GM12878 (cell line): ENCODE measurements at regions of chr19 and their contacts with region 1.

Region 1: DNA sequence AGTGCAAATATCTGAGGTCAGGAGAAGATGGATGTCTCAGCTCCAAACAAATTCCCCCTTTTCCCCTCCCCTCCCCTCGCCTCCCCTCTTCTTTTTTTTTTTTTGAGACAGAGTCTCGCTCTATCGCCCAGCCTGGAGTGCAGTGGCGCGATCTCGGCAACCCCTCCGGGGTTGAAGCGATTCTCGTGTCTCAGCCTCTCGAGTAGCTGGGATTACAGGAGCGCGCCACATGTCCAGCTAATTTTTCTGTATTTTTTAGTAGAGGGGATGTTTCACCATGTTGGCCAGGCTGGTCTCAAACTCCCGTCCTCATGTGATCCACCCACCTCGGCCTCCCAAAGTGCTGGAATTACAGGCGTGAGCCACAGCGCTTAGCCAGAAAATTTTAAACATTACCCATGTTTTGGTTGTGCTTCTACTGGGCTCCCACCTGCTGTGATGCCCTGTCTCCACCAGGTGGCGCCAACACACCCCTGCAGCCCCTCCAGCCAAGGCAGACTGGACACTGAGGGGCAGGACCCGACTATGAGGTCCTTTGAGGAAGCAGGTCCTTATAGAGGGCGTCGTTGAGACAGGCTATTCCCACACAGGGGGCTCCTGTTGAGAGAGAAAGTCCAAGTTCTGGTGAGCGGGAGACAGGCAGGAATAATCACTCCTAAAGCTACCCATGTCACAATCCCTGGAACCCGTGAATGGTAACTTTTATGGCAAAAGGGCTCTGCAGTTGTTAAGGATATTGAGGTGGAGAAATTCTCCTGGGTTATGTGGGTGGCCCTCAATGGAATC is 6.3 kb downstream of the ERICH4 start:
- DNase-seq: no peak
- ATAC-seq: peak; percentile 99
- H3K4me3 ChIP-seq: peak overlapping the region; percentile 61
- H3K27ac ChIP-seq: no peak overlapping the region
- H3K4me1 ChIP-seq: peaks cover 8% of the 10 kb centered on the region
- H3K27me3 ChIP-seq: no peaks in the 10 kb centered on the region
- CTCF ChIP-seq: peak; percentile 94 to 97 (median 97)
- EP300 ChIP-seq: no peak
- POLR2A ChIP-seq: no peak
- RAD21 ChIP-seq: peak; percentile 94

Region 2: DNA sequence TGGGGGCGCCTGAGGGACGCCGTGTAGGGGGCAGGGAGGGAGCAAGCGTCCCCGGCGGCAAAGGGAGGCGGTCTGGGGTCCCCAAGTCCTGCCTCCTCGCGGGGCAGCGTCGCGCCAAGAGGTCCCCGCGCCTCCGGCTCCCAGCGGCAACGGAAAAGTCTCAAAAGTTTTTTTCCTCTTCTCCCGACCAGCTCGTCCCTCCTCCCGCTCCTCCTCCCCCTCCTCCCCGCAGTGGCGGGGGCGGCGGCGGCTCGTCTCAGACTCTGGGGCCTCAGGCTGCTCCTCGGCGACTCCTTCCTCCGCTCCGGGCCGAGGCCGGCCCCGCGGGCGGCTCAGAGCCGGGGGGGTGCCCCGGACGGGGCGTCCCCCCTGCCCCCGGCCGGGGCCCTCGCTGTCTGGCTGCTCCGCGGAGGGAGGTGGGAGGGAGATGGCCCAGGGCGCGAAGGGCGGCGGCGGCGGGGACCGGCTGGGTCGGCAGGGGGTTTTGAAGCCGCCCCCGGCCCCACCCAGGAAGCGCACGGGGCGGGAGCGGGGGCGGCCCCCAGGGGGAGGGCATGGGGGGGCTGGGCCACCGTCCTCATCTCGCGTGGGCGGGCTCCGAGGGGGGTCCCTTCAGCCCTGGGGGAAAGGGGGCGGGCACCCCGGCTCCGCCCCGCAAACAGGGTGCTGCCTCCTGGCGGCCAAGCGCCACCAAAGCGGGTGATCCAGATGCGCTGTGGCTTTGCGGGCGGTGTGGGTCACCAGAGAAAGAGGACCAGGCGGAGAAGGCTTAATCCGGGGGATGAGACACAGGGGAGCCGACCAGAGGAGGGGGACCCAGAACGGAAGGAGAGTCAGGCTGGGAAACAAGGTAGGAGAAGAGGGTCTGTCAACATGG is 95.6 kb before region 1 on chr19 and contains the start of gene TGFB1:
- CTCF ChIA-PET with region 1: interaction called, 4 read pairs
- POLR2A ChIA-PET with region 1: no interaction called
- RAD21 ChIA-PET with region 1: no interaction called
- SMC1A ChIA-PET with region 1: no interaction called
- in situ Hi-C with region 1: no loop called
- intact Hi-C with region 1: loop called (anchors 5 kb)
- DNase-seq: peak; percentile 62
- ATAC-seq: peak; percentile 64
- H3K4me3 ChIP-seq: peak within 1 kb of the TSS; percentile 89
- H3K27ac ChIP-seq: peak within 1 kb of the TSS; percentile 84
- H3K4me1 ChIP-seq: peaks cover 16% of the 10 kb centered on the region
- H3K27me3 ChIP-seq: no peaks in the 10 kb centered on the region
- CTCF ChIP-seq: peak; percentile 88 to 94 (median 93)
- EP300 ChIP-seq: peak in 1 of 2 experiments; percentile 27; a peak in 1 of 4 replicates
- POLR2A ChIP-seq: peak; percentile 90
- RAD21 ChIP-seq: peak; percentile 56
- polyA plus RNA-seq, gene TGFB1: 0.23 to 0.37 TPM

Region 3: GRCh38 chr19:41541990-41542584 is 92.8 kb after region 1 on chr19:
- CTCF ChIA-PET with region 1: interaction called, 157 read pairs
- POLR2A ChIA-PET with region 1: interaction called, 3 read pairs
- RAD21 ChIA-PET with region 1: interaction called, 56 read pairs
- SMC1A ChIA-PET with region 1: interaction called, 69 read pairs
- in situ Hi-C with region 1: loop called (anchors 10 kb)
- intact Hi-C with region 1: loop called (anchors 1 kb)
- DNase-seq: no peak
- ATAC-seq: peak; percentile 49; the same call in 2 of the 3 replicates
- H3K4me3 ChIP-seq: no peak overlapping the region
- H3K27ac ChIP-seq: no peak overlapping the region
- H3K4me1 ChIP-seq: peaks cover 26% of the 10 kb centered on the region
- H3K27me3 ChIP-seq: no peaks in the 10 kb centered on the region
- CTCF ChIP-seq: peak; percentile 69 to 74 (median 71)
- EP300 ChIP-seq: no peak
- POLR2A ChIP-seq: no peak
- RAD21 ChIP-seq: peak; percentile 85

Region 4: DNA sequence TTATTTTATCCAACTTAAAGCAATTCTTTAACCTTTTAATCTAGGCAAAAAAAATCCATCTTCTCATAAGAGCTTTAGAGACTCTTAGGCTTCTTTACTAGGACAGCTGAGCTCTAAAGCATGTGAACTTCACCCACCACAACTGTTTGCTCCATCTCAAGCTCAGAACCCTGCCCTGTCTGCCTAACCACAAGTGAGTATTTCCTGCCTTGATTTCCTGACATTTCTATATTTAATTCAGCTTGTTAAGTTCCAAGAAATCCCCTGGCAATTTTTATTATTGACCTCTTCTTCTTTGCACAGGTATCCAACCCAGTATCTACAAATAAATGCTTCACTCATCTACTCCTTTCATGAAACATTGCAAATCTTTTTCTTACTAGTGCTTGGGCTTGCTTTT is 105.6 kb after region 1 on chr19:
- CTCF ChIA-PET with region 1: interaction called, 314 read pairs
- POLR2A ChIA-PET with region 1: no interaction called
- RAD21 ChIA-PET with region 1: interaction called, 6 read pairs
- SMC1A ChIA-PET with region 1: interaction called, 17 read pairs
- in situ Hi-C with region 1: no loop called
- intact Hi-C with region 1: no loop called
- DNase-seq: no peak
- ATAC-seq: no peak
- H3K4me3 ChIP-seq: peak overlapping the region; percentile 8; the same call in 1 of the 2 replicates
- H3K27ac ChIP-seq: no peak overlapping the region
- H3K4me1 ChIP-seq: peaks cover 24% of the 10 kb centered on the region
- H3K27me3 ChIP-seq: no peaks in the 10 kb centered on the region
- CTCF ChIP-seq: no peak
- EP300 ChIP-seq: no peak
- POLR2A ChIP-seq: no peak
- RAD21 ChIP-seq: no peak

Region 5: GRCh38 chr19:41570639-41571112 is 121.4 kb after region 1 on chr19:
- CTCF ChIA-PET with region 1: interaction called, 314 read pairs
- POLR2A ChIA-PET with region 1: interaction called, 6 read pairs
- RAD21 ChIA-PET with region 1: interaction called, 41 read pairs
- SMC1A ChIA-PET with region 1: interaction called, 41 read pairs
- in situ Hi-C with region 1: loop called (anchors 10 kb)
- intact Hi-C with region 1: loop called (anchors 1 kb)
- DNase-seq: no peak
- ATAC-seq: peak; percentile 100
- H3K4me3 ChIP-seq: no peak overlapping the region
- H3K27ac ChIP-seq: no peak overlapping the region
- H3K4me1 ChIP-seq: peaks cover 1% of the 10 kb centered on the region; the same call in 1 of the 2 replicates
- H3K27me3 ChIP-seq: no peaks in the 10 kb centered on the region
- CTCF ChIP-seq: peak; percentile 94 to 97 (median 96); a peak in 5 of 6 replicates
- EP300 ChIP-seq: no peak
- POLR2A ChIP-seq: peak; percentile 51; the same call in 1 of the 2 replicates
- RAD21 ChIP-seq: peak; percentile 93

Region 6: DNA sequence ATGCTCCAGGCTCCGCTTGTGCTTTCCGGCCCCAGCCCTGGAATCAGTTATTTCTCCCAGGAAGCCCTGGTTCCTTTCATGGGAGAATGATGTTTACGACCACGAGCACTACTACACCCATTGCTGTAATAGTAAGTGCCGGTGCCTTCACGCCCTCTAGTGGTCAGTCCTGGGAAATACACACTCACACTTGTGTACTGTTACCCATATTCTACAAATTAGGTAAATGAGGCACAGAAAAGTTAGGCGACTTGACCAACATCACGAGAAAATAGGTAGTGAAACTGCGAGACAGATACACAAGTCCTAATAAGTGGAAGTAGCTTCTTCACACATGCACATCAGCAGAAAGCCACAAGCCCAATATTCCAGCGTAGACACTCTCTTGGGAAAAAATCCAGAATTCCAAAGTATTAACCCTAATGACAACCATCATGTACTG is 148.3 kb after region 1 on chr19:
- CTCF ChIA-PET with region 1: interaction called, 11 read pairs
- POLR2A ChIA-PET with region 1: no interaction called
- RAD21 ChIA-PET with region 1: interaction called, 11 read pairs
- SMC1A ChIA-PET with region 1: interaction called, 12 read pairs
- in situ Hi-C with region 1: no loop called
- intact Hi-C with region 1: no loop called
- DNase-seq: peak; percentile 45
- ATAC-seq: peak; percentile 94
- H3K4me3 ChIP-seq: no peak overlapping the region
- H3K27ac ChIP-seq: no peak overlapping the region
- H3K4me1 ChIP-seq: no peaks in the 10 kb centered on the region
- H3K27me3 ChIP-seq: peaks cover 0 to 3% of the 10 kb centered on the region in 2 experiments; a peak in 3 of 4 replicates
- CTCF ChIP-seq: peak; percentile 83 to 98 (median 95)
- EP300 ChIP-seq: no peak
- POLR2A ChIP-seq: no peak
- RAD21 ChIP-seq: peak; percentile 68